ENCODE measurements at regions of chr13 and their contacts with region 1.

Region 1: DNA sequence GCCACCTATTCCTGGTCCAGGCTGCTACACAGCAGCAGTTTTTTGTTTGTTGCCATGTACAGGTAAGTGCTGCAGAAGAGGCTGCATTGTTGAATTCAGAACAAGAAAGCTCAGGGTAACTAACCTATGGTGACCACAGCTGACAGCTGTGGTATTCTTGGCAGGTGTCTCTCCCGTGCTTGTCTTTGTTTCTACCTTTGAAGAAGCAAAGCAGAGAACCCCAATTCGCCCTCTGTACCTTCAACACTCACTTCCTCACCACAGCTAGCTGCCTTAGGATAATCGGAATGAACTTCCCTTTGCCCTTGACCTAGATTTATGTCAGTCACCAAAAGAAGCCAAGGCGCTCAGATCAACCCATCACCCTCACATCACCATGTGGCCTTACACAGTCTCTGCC is 1703.3 kb upstream of the SLC10A2 start:
- DNase-seq: no peak
- H3K4me3 ChIP-seq: no peak overlapping the region
- CTCF ChIP-seq: no peak

Region 2: DNA sequence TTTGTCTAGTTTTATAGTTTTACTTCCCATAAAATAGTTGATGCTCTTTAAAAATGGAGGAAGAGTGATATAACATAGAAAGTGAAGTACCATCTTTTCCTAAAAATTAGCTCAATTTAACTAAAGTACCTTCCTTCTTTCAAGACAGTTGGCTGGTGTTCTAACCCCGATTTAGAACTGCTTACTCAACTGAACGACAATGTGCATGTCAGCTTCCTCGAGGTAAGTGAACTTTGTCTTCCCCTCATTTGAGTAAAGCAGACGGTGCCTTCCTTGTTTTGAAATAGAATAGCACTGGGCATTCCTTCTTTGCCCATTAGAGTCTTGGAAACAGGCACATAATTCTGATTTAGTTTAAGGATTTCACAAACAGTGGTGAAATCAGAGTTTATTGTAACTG is 246.7 kb after region 1 on chr13:
- in situ Hi-C with region 1: no loop called
- DNase-seq: no peak
- H3K4me3 ChIP-seq: no peak overlapping the region
- CTCF ChIP-seq: no peak

Region 3: GRCh38 chr13:106536244-106537034 is 1766.9 kb after region 1 on chr13:
- in situ Hi-C with region 1: loop called (anchors 10 kb)
- DNase-seq: peak; percentile 87
- H3K4me3 ChIP-seq: peak overlapping the region; percentile 74
- CTCF ChIP-seq: peak; percentile 97